Panc1 (cell line): ENCODE measurements at regions of chr19 and their contacts with region 1.

Region 1: DNA sequence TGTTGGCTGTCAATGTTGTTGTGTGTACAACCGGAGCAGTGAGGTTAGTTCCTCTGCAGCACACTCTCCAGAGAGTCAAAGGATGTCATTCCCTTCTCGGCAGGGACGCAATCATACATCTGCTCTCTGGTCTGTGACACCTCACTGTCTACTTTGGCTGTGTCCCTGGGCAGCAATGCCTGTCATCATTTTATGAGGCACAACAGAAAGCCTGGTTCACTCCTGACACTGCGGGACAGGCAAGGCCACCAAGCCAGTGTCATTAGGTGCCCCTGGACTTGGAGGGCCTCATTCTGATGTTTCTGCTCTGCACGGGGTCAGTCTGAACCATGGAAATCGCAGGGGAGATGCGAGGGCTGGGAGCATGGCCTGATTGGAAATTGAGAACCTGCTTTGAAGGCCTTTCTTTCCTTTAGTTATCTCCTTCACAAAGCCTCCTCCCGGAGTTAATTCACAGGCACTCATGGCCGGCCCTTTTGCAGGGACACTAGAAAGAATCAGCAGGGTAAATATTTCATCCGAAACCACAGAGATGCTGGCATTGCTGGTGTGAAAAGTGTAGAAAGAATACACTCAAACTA is 284.4 kb downstream of the ZNF536 start:
- DNase-seq: no peak
- ATAC-seq: no peak
- H3K4me3 ChIP-seq: no peak overlapping the region
- H3K27ac ChIP-seq: no peak overlapping the region
- H3K4me1 ChIP-seq: no peaks in the 10 kb centered on the region
- H3K27me3 ChIP-seq: peaks cover 23% of the 10 kb centered on the region
- CTCF ChIP-seq: no peak

Region 2: DNA sequence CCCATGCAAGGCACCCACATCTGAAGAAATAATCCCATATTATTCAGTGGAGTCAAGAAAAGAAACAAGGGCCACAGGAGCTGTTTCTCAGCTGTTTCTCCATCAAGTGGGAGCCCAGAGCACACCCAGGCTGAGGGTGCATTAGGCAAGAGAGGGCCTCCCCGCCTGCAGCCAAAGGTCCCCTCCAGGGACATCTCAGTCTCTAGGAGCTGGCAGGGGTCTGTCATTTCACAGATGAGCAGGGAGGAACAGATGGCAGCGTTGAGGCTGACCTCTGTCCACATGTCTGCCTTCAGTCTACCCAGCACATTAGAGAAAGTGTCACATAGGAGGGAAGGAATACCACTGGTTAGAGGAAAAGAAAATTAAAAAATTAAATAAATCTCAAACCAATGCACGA is 126.7 kb before region 1 on chr19:
- CTCF ChIA-PET with region 1: no interaction called
- POLR2A ChIA-PET with region 1: no interaction called
- in situ Hi-C with region 1: no loop called
- intact Hi-C with region 1: no loop called
- DNase-seq: no peak
- ATAC-seq: no peak
- H3K4me3 ChIP-seq: no peak overlapping the region
- H3K27ac ChIP-seq: no peak overlapping the region
- H3K4me1 ChIP-seq: no peaks in the 10 kb centered on the region
- H3K27me3 ChIP-seq: 0 out of 2 replicates have a peak, but pooled peaks cover 3% of the 10 kb centered on the region
- CTCF ChIP-seq: no peak

Region 3: GRCh38 chr19:30577551-30578105 is 79.0 kb before region 1 on chr19:
- CTCF ChIA-PET with region 1: no interaction called
- POLR2A ChIA-PET with region 1: no interaction called
- in situ Hi-C with region 1: no loop called
- intact Hi-C with region 1: no loop called
- DNase-seq: no peak
- ATAC-seq: no peak
- H3K4me3 ChIP-seq: no peak overlapping the region
- H3K27ac ChIP-seq: no peak overlapping the region
- H3K4me1 ChIP-seq: no peaks in the 10 kb centered on the region
- H3K27me3 ChIP-seq: peaks cover 10% of the 10 kb centered on the region
- CTCF ChIP-seq: no peak

Region 4: GRCh38 chr19:31890218-31890617 is 1233.6 kb after region 1 on chr19:
- CTCF ChIA-PET with region 1: interaction called, 10 read pairs
- POLR2A ChIA-PET with region 1: no interaction called
- in situ Hi-C with region 1: no loop called
- intact Hi-C with region 1: no loop called
- DNase-seq: no peak
- ATAC-seq: no peak
- H3K4me3 ChIP-seq: no peak overlapping the region
- H3K27ac ChIP-seq: no peak overlapping the region
- H3K4me1 ChIP-seq: no peaks in the 10 kb centered on the region
- H3K27me3 ChIP-seq: peaks cover 23% of the 10 kb centered on the region
- CTCF ChIP-seq: no peak